ENCODE measurements at regions of chr12 and their contacts with region 1.

Region 1: DNA sequence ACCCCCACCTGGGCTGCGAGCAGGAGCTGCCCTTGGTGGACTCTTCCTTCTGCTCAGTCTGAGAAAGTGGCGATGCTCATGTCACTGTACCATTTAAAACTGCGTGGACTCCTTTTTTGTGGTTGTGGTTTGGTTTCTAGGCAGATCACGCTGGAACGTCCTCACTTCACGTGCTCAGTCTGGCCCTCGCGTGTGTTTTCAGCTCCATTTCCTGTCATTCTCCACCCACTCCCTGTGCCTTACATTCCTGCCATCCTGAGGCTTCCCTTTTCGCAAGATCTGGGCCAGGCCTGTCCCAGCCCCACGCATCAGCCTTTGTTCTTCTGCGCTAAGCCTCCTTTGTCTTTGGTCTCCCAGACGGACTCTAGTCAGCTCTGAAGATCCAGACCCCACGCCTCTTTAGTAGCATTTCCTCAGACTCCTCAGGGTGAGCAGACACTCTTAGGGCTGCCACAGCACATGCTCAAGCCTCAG is 105.4 kb downstream of the FBXL14 start:
- DNase-seq: peak in 28 of 35 experiments; percentile 4 to 54 (median 22)
- ATAC-seq: peak; percentile 76 to 87 (median 84)
- H3K4me3 ChIP-seq: no peak overlapping the region
- H3K4me3 Mint-ChIP-seq: peak overlapping the region; percentile 2 to 74 (median 9)
- H3K27ac ChIP-seq: peak overlapping the region; percentile 56
- H3K27ac Mint-ChIP-seq: peak overlapping the region; percentile 82 to 94
- H3K4me1 ChIP-seq: peaks cover 21 to 29% of the 10 kb centered on the region in 2 experiments
- H3K4me1 Mint-ChIP-seq: peaks cover 28 to 40% (median 33%) of the 10 kb centered on the region in 3 donors
- H3K27me3 ChIP-seq: no peaks in the 10 kb centered on the region
- H3K27me3 Mint-ChIP-seq: no peaks in the 10 kb centered on the region

Region 2: GRCh38 chr12:1147821-1148220 is 341.1 kb before region 1 on chr12:
- CTCF ChIA-PET with region 1: no interaction called
- POLR2A ChIA-PET with region 1: interaction called in 1 of 2 experiments, 13 read pairs
- DNase-seq: no peak
- ATAC-seq: no peak
- H3K4me3 ChIP-seq: no peak overlapping the region
- H3K4me3 Mint-ChIP-seq: no peak overlapping the region
- H3K27ac ChIP-seq: no peak overlapping the region
- H3K27ac Mint-ChIP-seq: no peak overlapping the region
- H3K4me1 ChIP-seq: no peaks in the 10 kb centered on the region
- H3K4me1 Mint-ChIP-seq: peaks cover 6 to 10% (median 7%) of the 10 kb centered on the region in 3 donors
- H3K27me3 ChIP-seq: no peaks in the 10 kb centered on the region
- H3K27me3 Mint-ChIP-seq: no peaks in the 10 kb centered on the region

Measured in T-cell (primary cell).